ENCODE measurements at regions of chr7 and their contacts with region 1.

Region 1: DNA sequence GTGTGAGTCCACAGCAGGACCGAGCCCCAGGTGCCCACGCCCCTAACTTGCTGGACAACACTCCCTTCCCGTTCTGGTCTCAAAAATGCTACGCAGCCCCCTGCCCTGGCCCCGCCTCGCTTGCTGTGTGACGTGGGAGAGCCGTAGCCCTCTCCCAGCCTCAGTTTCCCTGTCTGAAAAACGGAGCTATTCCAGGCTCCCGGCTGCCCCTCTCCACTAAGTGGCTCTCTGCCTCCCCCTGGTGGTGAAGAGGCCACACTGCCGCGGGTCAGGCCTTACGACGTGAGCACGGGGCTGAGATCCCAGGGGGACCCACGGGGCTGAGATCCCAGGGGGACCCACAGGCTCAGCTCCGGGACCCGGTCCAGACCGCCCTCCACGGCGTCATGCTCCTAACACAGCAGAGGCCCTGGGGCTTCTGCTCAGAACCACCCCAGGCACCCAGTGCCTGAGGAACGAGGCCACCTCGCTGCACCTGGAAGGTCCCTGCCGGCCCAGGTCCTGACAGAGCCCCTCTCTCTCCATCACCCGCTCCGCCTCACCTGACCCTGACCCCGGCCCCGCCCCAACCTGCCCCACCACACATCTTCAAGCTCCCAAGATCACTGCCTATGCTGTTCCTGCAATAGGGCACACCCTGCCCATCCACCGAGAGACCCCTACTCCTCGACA is 26.7 kb downstream of the MICALL2 start:
- DNase-seq: peak; percentile 94
- H3K4me3 Mint-ChIP-seq: no peak overlapping the region
- H3K27ac Mint-ChIP-seq: no peak overlapping the region
- H3K4me1 Mint-ChIP-seq: peaks cover 2% of the 10 kb centered on the region
- H3K27me3 Mint-ChIP-seq: peaks cover 2% of the 10 kb centered on the region

Region 2: GRCh38 chr7:1225441-1226185 is 206.9 kb before region 1 on chr7:
- intact Hi-C with region 1: loop called (anchors 1 kb)
- DNase-seq: peak; percentile 76
- H3K4me3 Mint-ChIP-seq: no peak overlapping the region
- H3K27ac Mint-ChIP-seq: peak overlapping the region; percentile 51
- H3K4me1 Mint-ChIP-seq: peaks cover 2% of the 10 kb centered on the region
- H3K27me3 Mint-ChIP-seq: peaks cover 56% of the 10 kb centered on the region

Region 3: DNA sequence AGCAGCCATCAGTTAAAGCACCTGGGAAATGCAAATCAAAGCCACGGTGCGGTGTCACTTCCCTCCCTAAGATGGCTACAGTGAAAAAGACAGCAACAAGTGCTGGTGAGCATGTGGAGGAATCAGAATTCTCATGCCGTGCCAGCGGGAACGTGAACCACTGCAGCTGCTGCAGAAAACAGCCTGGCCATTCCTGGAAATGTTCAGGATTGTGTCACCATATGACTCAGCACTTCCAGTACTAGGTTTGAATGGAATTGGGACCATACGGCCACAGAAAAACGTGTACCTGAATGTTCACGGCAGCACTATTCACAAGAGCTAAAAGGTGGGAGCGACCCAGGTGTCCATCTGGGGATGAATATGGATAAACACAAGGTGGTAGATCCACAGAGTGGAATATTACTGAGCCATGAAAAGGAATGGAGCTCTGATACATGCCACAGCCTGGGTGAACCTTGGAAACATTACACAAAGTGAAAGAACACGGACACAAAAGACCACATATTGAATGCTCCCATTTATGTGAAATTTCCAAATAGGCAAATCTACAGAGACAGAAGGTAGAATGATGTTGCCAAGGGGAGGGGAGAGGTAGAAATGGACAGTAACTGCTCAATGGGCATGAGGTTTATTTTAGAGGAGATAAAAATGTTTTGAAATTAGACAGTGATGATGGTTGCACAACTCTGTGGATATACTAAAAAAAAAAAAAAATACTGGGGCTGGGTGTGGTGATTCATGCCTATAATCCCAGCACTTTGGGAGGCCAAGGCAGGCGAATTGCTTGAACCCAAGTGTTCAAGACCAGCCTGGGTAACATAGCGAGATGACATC is 34.8 kb before region 1 on chr7:
- intact Hi-C with region 1: no loop called
- DNase-seq: no peak
- H3K4me3 Mint-ChIP-seq: no peak overlapping the region
- H3K27ac Mint-ChIP-seq: no peak overlapping the region
- H3K4me1 Mint-ChIP-seq: no peaks in the 10 kb centered on the region
- H3K27me3 Mint-ChIP-seq: peaks cover 16% of the 10 kb centered on the region

Measured in activated CD4-positive, alpha-beta T cell treated with anti-CD3 and anti-CD28 coated beads, Interleukin-2, amount 10 ng/mL, durations not matched to agents 24 days and 14 days (primary cell).